AG04449 (cell line): ENCODE measurements at regions of chr19 and their contacts with region 1.

Region 1: GRCh38 chr19:53409505-53410204 is 14.7 kb downstream of the ZNF765 start:
- DNase-seq: no peak
- H3K4me3 ChIP-seq: no peak overlapping the region
- CTCF ChIP-seq: no peak

Region 2: GRCh38 chr19:53355739-53356138 is 53.9 kb before region 1 on chr19:
- CTCF ChIA-PET with region 1: no interaction called
- POLR2A ChIA-PET with region 1: no interaction called
- DNase-seq: no peak
- H3K4me3 ChIP-seq: no peak overlapping the region
- CTCF ChIP-seq: no peak

Region 3: DNA sequence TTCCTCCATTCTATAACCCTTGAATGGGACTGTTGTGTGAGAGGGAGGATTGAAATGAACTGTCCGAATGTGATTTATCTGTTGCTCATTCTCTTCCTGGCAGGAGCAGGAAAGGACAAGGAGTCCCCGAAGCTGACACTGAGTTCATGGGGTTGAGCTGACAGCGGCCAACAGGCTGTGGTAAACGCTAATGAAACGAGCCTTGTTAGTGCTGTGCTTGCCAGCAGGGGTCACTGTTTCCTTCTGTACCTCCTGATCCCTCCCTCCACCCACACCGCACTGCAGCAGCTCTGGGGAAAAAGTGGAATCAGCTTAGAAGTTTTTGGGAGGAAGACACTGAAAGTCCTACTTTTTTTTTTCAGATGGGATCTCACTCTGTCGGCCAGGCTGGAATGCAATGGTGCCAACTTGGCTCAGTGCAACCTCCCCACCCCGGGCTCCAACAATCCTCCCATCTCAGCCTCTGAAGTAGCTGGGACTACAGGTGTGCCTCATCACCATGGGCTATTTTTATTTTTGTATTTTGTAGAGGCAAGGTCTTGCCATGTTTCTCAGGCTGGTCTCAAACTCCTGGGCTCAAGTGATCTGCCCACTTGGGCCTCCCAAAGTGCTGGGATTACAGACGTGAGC is 15.4 kb after region 1 on chr19:
- CTCF ChIA-PET with region 1: interaction called, 15 read pairs
- POLR2A ChIA-PET with region 1: no interaction called
- DNase-seq: no peak
- H3K4me3 ChIP-seq: no peak overlapping the region
- CTCF ChIP-seq: peak; percentile 70